PC-3 (cell line): ENCODE measurements at regions of chr9 and their contacts with region 1.

Region 1: GRCh38 chr9:134325817-134326723 is at the start of gene RXRA:
- DNase-seq: peak; percentile 65
- ATAC-seq: peak; percentile 54
- H3K4me3 ChIP-seq: peak within 1 kb of the TSS; percentile 86
- H3K27ac ChIP-seq: peak within 1 kb of the TSS; percentile 20; the same call in 1 of the 2 replicates
- H3K4me1 ChIP-seq: peaks cover 14% of the 10 kb centered on the region; the same call in 1 of the 2 replicates
- H3K27me3 ChIP-seq: no peaks in the 10 kb centered on the region
- CTCF ChIP-seq: no peak
- total RNA-seq, gene RXRA: 17.5 and 23.3 TPM in 2 replicates

Region 2: DNA sequence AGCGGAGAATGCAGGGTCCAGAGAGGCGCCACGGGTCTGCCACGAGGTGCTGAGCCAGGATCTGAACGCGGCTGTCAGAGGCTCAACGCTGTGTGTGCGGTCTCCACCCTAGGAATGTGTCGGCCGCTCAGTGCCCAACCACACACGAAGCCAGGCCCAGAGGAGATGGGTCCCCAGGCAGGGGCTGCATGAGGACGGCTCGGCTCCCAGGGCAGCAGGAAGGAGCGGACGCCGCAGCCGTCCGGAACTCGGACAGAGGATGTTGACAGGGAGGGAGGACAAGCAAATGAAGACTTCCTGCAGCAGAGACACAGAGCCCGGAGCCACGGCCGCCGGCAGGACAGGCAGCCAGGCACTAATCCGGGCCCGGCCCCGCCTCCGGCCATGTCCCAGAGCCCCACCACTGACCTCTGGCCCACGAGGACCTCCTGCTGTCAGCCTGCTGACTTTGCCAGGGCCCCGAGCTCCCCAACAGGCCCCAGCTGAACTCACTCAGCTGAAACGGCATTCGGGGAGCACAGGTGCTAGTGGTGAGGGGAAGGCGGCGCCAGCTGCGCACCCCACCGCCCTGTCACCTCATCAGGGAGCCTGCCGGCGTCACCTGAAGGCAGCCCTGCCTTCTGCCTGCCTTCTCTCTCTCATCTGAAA is 346.7 kb before region 1 on chr9:
- CTCF ChIA-PET with region 1: no interaction called
- POLR2A ChIA-PET with region 1: no interaction called
- intact Hi-C with region 1: no loop called
- DNase-seq: no peak
- ATAC-seq: no peak
- H3K4me3 ChIP-seq: no peak overlapping the region
- H3K27ac ChIP-seq: no peak overlapping the region
- H3K4me1 ChIP-seq: no peaks in the 10 kb centered on the region
- H3K27me3 ChIP-seq: no peaks in the 10 kb centered on the region
- CTCF ChIP-seq: no peak

Region 3: DNA sequence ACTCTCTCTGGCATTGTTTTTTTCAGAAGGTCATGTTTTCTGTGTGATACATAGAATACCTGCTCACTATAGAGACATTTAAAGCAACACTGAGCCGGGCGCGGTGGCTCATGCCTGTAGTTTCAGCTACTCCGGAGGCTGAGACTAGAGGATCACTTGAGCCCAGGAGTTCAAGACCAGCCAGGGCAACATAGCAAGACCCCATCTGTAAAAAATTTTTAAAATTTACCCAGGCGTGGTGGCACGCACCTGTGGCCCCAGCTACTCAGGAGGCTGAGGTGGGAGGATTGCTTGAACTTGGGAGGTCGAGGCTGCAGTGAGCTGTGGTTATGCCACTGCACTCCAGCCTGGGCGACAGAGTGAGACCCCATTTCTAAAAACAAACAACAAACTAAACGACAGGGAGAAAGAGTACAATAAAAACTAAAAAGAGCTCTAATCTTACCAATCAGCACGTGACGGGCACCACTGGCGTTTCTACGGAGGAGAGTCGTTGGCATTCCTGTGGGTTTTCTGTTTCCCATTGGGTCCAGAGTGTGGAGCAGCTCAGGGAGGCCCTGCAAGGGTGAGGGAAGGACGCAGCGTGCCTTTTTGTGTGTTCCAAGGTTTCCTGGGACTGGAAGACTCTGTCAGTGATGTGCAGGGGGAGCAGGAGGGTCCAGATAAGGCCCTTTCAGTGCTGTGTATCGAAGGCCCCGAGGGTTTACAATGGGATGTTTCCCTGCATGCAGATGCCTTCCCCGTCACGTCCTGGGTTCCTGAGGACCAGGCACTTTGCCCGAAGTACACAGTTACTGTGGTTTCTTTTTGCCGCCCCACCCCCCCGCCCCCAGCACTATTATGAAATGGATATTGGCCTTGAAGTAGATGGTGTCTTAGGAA is 154.5 kb before region 1 on chr9:
- CTCF ChIA-PET with region 1: no interaction called
- POLR2A ChIA-PET with region 1: no interaction called
- intact Hi-C with region 1: loop called (anchors 2 kb)
- DNase-seq: no peak
- ATAC-seq: no peak
- H3K4me3 ChIP-seq: no peak overlapping the region
- H3K27ac ChIP-seq: no peak overlapping the region
- H3K4me1 ChIP-seq: no peaks in the 10 kb centered on the region; the same call in 1 of the 2 replicates
- H3K27me3 ChIP-seq: peaks cover 5% of the 10 kb centered on the region
- CTCF ChIP-seq: no peak

Region 4: DNA sequence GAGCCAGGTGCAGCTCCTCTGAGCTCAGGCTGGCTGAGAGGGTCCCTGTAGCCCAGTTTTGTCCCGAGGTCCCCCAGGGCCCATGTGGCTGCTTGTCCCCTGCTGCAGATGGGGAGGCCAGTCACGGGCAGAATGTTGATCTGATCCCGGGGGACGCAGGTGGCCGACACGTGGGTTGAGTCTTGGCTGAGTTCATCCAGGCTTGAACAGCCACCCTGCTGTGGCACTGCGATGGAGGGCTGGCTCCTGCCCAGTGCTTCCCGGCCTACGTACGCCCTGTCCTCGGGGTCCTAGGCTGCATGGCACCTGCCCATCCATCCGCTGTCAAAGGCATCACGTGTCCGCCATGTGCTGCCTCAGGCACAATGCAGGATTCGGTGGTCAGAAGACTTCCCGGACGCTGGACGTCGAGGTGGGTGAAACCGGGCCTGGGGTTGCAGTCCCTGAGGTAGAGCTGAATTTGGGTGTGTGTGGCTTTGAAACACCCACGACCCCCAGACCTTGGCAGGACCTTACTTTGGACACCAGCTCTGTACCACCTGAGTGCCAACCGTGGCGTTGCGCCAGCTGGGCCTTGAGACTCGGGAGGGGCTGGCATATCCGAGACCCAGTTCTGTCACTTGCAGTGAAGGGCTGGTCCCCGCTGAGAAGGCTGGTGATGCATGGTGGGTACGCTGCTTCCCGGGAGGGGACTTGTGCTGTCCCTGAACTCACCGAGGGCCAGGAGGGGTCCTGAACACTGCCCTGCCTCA is 22.5 kb after region 1 on chr9:
- CTCF ChIA-PET with region 1: no interaction called
- POLR2A ChIA-PET with region 1: no interaction called
- intact Hi-C with region 1: no loop called
- DNase-seq: no peak
- ATAC-seq: no peak
- H3K4me3 ChIP-seq: no peak overlapping the region
- H3K27ac ChIP-seq: no peak overlapping the region
- H3K4me1 ChIP-seq: no peaks in the 10 kb centered on the region
- H3K27me3 ChIP-seq: no peaks in the 10 kb centered on the region
- CTCF ChIP-seq: no peak

Region 5: GRCh38 chr9:134413890-134414731 is 88.0 kb after region 1 on chr9:
- CTCF ChIA-PET with region 1: no interaction called
- POLR2A ChIA-PET with region 1: no interaction called
- intact Hi-C with region 1: loop called (anchors 10 kb)
- DNase-seq: peak; percentile 88
- ATAC-seq: peak; percentile 97
- H3K4me3 ChIP-seq: no peak overlapping the region
- H3K27ac ChIP-seq: peak overlapping the region; percentile 20; the same call in 1 of the 2 replicates
- H3K4me1 ChIP-seq: peaks cover 20% of the 10 kb centered on the region
- H3K27me3 ChIP-seq: no peaks in the 10 kb centered on the region
- CTCF ChIP-seq: no peak

Region 6: GRCh38 chr9:134570151-134570621 is 244.1 kb after region 1 on chr9:
- CTCF ChIA-PET with region 1: no interaction called
- POLR2A ChIA-PET with region 1: no interaction called
- intact Hi-C with region 1: no loop called
- DNase-seq: no peak
- ATAC-seq: no peak
- H3K4me3 ChIP-seq: no peak overlapping the region
- H3K27ac ChIP-seq: no peak overlapping the region
- H3K4me1 ChIP-seq: no peaks in the 10 kb centered on the region
- H3K27me3 ChIP-seq: no peaks in the 10 kb centered on the region
- CTCF ChIP-seq: no peak